ENCODE measurements at regions of chr19 and their contacts with region 1.

Region 1: DNA sequence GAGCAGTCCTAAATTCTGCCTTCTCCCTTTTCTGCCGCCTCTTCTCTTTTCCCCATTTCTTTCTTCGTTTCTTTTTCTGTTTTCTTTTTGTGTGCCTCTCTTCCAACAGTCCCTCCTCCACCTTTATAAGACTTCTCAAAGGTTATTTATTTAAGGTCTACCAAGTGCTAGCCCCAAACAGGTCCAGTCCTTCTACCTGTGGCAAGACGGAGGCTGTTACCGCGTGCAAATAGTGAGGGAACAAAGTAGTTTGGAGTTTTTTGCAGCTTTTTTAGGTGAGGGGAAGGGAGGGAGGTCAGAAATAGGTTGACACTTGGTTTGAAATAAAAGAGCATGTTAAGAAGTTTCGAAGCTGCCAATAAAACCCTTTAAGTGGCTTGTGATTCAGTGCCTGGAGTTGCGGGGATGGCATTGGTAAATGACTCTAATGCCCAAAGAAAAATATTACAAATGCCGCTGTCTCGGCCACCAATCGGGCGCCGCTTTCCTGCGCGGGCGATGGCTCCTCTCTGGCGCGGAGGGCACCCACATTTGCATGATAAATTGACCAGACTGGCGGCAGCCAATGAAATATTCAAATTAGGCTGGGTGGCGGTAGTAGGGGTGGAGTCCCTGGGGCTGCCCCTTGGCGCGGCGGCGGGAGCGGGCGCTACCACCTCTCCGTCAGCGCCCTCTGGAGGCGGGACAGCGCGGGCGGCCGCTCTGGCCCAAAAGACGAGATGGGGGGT is 7.5 kb upstream of the TSHZ3 start:
- DNase-seq: peak; percentile 76
- H3K4me3 Mint-ChIP-seq: no peak overlapping the region
- H3K27ac Mint-ChIP-seq: no peak overlapping the region
- H3K4me1 Mint-ChIP-seq: peaks cover 44% of the 10 kb centered on the region
- H3K27me3 Mint-ChIP-seq: peaks cover 79% of the 10 kb centered on the region

Region 2: GRCh38 chr19:30227661-30228428 is 1128.9 kb before region 1 on chr19:
- CTCF ChIA-PET with region 1: no interaction called
- intact Hi-C with region 1: loop called (anchors 5 kb)
- DNase-seq: peak; percentile 70
- H3K4me3 Mint-ChIP-seq: peak overlapping the region; percentile 79
- H3K27ac Mint-ChIP-seq: no peak overlapping the region
- H3K4me1 Mint-ChIP-seq: peaks cover 33% of the 10 kb centered on the region
- H3K27me3 Mint-ChIP-seq: peaks cover 58% of the 10 kb centered on the region

Region 3: GRCh38 chr19:30682999-30683536 is 673.7 kb before region 1 on chr19:
- CTCF ChIA-PET with region 1: no interaction called
- intact Hi-C with region 1: loop called (anchors 2 kb)
- DNase-seq: peak; percentile 73
- H3K4me3 Mint-ChIP-seq: no peak overlapping the region
- H3K27ac Mint-ChIP-seq: no peak overlapping the region
- H3K4me1 Mint-ChIP-seq: no peaks in the 10 kb centered on the region
- H3K27me3 Mint-ChIP-seq: peaks cover 42% of the 10 kb centered on the region

Region 4: GRCh38 chr19:30757837-30758617 is 598.7 kb before region 1 on chr19:
- CTCF ChIA-PET with region 1: no interaction called
- intact Hi-C with region 1: no loop called
- DNase-seq: no peak
- H3K4me3 Mint-ChIP-seq: no peak overlapping the region
- H3K27ac Mint-ChIP-seq: no peak overlapping the region
- H3K4me1 Mint-ChIP-seq: no peaks in the 10 kb centered on the region
- H3K27me3 Mint-ChIP-seq: peaks cover 2% of the 10 kb centered on the region

Region 5: GRCh38 chr19:30799865-30800755 is 556.6 kb before region 1 on chr19:
- CTCF ChIA-PET with region 1: no interaction called
- intact Hi-C with region 1: loop called (anchors 5 kb)
- DNase-seq: peak; percentile 60
- H3K4me3 Mint-ChIP-seq: no peak overlapping the region
- H3K27ac Mint-ChIP-seq: no peak overlapping the region
- H3K4me1 Mint-ChIP-seq: no peaks in the 10 kb centered on the region
- H3K27me3 Mint-ChIP-seq: peaks cover 23% of the 10 kb centered on the region

Region 6: DNA sequence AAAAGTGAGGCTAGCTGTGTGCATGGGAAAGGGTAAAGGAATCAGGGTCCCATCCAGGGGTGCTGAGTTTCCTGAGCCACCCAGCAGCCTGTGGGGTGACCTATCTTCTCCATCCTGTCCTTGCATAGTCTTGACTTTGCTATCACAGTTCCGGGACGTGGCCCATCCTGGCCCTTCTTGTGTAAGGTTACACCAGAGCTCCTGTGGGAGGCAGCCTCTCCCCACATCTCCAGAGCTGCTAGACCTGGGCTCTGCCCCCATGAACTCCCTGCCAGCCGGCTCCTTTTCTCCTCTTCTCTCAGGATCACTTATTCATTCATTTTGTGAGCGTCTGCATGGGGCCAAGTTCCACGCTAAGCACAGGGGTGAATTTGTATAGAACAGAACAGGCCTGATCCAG is 246.4 kb before region 1 on chr19:
- CTCF ChIA-PET with region 1: interaction called, 5 read pairs
- intact Hi-C with region 1: loop called (anchors 1 kb)
- DNase-seq: peak; percentile 50
- H3K4me3 Mint-ChIP-seq: no peak overlapping the region
- H3K27ac Mint-ChIP-seq: no peak overlapping the region
- H3K4me1 Mint-ChIP-seq: peaks cover 12% of the 10 kb centered on the region
- H3K27me3 Mint-ChIP-seq: peaks cover 31% of the 10 kb centered on the region

Region 7: DNA sequence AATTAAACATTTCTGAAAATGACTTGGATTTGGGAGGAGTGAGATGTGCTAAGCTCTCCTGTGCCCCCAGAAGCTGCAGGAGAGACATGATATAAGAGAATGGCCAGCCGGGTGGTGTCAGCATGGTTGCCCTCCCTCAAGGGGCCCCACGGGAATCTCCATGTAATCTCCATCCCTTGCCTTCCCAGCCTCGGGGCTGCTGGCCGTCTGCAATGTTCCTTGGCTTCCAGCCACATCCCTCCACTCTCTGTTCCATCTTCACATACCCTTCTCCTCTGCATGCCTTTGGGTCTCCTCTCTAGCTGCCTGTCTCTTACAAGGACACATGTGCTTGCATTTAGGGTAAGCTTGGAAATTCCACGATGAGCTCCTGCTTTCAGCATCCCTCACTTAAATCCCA is 179.5 kb before region 1 on chr19:
- CTCF ChIA-PET with region 1: no interaction called
- intact Hi-C with region 1: no loop called
- DNase-seq: no peak
- H3K4me3 Mint-ChIP-seq: no peak overlapping the region
- H3K27ac Mint-ChIP-seq: no peak overlapping the region
- H3K4me1 Mint-ChIP-seq: no peaks in the 10 kb centered on the region
- H3K27me3 Mint-ChIP-seq: peaks cover 7% of the 10 kb centered on the region

Region 8: DNA sequence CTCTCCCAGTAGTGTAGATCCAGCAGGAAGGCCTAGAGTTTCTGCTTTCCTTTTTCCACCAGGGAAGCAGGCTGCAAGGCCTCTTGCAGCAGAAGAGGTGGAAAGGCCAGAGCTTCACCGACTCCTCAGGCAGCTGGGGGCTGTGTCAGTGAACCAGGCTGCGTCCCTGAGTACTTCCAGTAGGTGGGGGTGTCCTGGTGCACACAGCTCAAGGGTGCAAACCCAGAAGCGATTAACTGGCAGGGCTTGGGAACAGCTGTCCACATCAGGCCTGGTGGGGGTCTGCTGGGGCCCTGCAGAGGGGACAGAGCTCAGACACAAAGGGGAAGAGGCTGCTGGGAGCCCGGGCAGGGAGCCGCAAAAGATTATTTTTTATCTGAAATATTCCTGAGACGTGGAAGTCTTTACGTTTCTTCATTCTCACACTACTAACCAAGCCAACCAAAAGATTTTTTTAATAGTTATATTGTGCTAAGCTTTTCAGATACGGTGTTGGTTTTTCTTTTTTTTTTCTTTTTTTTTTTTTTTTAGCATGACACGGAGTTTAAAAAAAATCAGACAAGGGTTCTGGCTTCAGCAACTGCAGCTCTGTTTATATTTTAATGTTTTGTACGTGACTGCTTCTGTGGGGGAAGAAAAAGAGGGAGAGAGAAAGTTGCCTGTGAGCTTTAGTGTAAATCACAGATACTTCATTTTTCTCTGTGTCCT is 18.5 kb before region 1 on chr19:
- CTCF ChIA-PET with region 1: interaction called, 3 read pairs
- intact Hi-C with region 1: loop called (anchors 1 kb)
- DNase-seq: peak; percentile 59
- H3K4me3 Mint-ChIP-seq: no peak overlapping the region
- H3K27ac Mint-ChIP-seq: no peak overlapping the region
- H3K4me1 Mint-ChIP-seq: peaks cover 29% of the 10 kb centered on the region
- H3K27me3 Mint-ChIP-seq: peaks cover 2% of the 10 kb centered on the region

Region 9: DNA sequence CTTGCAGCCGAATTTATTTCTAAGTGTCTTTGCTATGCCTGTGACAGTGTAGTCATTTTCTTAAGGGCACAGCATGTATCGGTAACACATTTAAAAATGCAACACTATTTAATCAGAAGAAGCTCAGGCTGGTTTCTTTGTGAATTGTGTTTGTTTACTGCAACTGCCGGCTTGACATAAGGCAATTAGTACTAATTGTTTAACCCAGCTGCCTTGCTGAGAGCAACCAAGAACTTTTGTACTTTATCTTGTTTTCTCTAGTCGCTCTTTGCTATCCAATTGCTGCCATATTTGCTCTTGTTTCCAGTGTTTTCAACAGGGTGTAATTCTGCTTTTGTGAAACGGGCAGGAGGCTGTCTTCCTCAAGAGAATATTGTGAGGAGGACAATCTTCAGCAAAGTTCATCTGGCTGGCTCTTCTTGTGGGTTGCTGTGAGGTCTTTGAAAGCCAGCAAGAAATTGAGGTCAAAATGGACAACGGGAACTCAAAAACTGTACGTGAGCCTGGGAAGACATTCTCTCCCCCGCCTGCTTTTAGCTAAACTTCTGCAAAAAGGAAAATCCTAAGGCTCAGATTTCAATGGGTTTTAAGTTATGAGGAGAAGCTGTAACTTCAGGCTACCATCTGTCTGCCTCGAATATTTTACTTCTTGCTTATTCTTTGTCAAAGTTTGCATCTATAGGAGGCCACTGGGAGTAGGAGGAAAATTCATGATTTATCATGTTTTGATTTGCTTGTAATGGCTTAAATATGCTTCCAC is 68.3 kb after region 1 on chr19:
- CTCF ChIA-PET with region 1: no interaction called
- intact Hi-C with region 1: no loop called
- DNase-seq: no peak
- H3K4me3 Mint-ChIP-seq: no peak overlapping the region
- H3K27ac Mint-ChIP-seq: no peak overlapping the region
- H3K4me1 Mint-ChIP-seq: no peaks in the 10 kb centered on the region
- H3K27me3 Mint-ChIP-seq: peaks cover 19% of the 10 kb centered on the region

Measured in activated naive CD4-positive, alpha-beta T cell treated with anti-CD3 and anti-CD28 coated beads for 36 hours (primary cell).